PC-9 (cell line): ENCODE measurements at regions of chr7 and their contacts with region 1.

Region 1: DNA sequence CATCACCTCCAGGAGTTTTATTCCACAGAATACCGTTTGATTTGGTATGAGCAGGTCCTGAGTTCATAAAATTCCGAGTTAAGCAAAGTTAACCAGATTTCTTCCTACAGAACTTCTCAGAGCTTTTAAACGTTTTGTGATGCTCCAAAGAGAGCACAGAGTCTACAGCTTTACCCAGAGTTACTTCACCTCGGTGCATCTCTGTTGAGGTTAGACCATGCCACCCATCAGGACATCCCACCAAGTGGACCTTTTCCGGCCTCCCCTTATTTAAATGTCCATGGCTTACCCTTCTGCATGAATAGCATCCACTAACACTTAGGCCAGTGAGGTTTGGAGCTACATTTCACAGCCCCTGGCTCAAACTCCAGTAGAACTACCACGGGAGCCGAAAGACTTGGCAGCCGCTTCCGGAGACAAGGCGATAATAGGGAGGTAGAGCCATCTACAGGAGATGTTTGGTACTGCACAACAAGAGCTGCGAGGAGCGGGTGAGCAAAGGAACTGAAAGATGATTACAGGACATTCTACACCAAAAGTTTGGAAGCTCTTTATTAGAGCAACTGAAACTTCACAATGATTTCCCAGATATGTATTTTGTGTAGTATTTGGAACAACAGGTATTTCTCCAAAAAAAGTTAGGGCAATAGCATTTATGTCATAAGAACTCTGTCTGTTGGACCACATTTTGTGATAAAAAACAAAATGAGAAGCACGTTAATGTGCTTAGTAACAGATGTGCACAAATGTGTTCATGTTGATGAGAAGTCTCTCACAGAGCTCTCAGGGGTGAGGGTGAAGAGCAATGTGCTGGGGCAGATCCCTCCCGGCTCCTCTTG is 174.7 kb downstream of the HERPUD2 start:
- DNase-seq: peak; percentile 55 to 61
- H3K4me3 ChIP-seq: no peak overlapping the region
- H3K27ac ChIP-seq: no peak overlapping the region
- H3K4me1 ChIP-seq: peaks cover 21% of the 10 kb centered on the region
- H3K27me3 ChIP-seq: no peaks in the 10 kb centered on the region
- CTCF ChIP-seq: peak; percentile 100

Region 2: DNA sequence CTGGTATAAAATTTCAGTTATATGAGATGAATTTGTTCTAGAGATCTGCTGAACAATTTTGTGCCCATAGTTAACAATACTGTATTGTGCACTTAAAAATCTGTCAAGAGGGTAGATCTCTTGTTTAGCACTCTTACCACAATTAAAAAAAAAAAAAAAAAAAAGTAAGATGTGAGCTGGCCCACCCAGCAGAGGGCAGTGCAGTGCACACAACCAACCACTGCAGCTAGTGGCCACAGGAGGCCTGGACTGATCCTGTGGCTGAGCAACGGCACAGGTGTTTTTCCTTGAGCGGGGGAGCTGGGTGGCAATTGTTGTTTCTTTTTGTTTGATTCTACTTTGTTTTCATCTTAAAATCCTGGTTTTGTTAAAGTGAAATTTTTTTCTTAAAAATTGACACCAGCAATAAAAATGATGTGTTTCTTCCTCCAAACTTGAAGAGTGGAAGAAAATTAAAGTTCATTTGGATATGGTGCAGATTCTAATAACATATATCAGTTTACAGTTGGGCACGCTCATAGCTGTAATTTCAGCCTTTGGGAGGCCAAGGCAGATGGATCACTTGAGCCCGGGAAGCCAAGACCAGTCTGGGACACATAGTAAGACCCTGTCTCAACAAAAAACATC is 95.2 kb before region 1 on chr7:
- CTCF ChIA-PET with region 1: interaction called, 6 read pairs
- POLR2A ChIA-PET with region 1: no interaction called
- intact Hi-C with region 1: loop called (anchors 1 kb)
- DNase-seq: peak; percentile 59 to 63
- H3K4me3 ChIP-seq: no peak overlapping the region
- H3K27ac ChIP-seq: no peak overlapping the region
- H3K4me1 ChIP-seq: no peaks in the 10 kb centered on the region
- H3K27me3 ChIP-seq: no peaks in the 10 kb centered on the region
- CTCF ChIP-seq: peak; percentile 94